GM12878 (cell line): ENCODE measurements at regions of chr12 and their contacts with region 1.

Region 1: DNA sequence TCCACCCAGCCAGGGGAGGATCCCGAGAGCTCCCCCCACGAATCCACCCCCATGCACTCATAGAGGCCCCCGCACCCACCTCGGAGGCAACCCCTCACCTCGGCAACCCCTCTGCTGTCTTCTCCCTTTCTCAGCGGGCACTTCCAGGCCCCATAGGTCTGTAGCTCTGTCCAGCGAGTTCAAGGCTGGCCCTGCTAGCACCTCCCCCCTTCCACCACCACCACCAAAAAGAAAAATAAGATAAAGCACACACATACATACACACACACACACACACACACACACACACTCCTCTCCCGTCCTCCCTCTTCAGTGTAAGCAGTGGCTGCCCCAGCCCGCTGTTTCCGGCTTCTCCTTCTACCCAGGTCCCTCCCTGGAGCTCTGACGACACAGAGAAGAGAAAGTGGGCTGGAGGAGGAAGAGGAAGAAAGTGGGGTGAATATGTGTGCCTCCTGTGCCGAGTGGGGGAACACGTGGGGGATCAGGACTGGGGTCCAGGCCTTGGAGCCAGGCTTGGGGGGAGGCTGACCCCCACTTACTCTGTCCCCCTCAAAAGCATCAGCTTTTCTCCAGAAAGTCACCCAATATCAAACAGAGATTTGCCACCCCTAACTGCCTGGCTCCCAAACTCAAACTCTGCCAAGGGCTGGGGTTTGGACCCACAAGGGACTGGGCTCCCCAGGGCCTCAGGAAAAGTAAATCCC is at the start of gene STAT6:
- DNase-seq: no peak
- ATAC-seq: peak; percentile 81
- H3K4me3 ChIP-seq: peak within 1 kb of the TSS; percentile 95
- H3K27ac ChIP-seq: peak within 1 kb of the TSS; percentile 97
- H3K4me1 ChIP-seq: peaks cover 8% of the 10 kb centered on the region
- H3K27me3 ChIP-seq: no peaks in the 10 kb centered on the region
- CTCF ChIP-seq: no peak
- EP300 ChIP-seq: no peak
- POLR2A ChIP-seq: peak; percentile 74
- RAD21 ChIP-seq: no peak
- polyA plus RNA-seq, gene STAT6: 14.2 to 17.3 TPM

Region 2: DNA sequence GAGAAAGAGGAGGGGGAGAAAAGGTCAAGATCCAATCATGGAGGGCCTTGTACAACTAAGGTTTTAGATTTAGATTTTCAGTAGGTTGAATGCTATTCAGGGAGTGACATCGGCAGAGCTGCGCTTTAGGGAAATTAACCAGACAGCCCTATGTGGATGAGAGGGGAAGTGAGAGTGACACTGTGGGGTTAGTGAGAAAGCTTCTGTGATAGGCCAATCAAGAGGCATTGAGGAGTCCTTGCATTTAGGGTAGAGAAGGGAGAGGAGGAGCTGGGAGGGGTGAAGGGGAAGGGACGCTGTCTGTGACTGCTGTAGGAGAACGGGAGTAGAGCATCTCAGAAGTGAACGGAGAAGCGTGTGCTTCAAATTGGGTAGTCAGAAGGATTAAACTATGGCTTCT is 344.6 kb before region 1 on chr12:
- CTCF ChIA-PET with region 1: interaction called, 9 read pairs
- POLR2A ChIA-PET with region 1: no interaction called
- RAD21 ChIA-PET with region 1: interaction called, 11 read pairs
- SMC1A ChIA-PET with region 1: interaction called, 11 read pairs
- in situ Hi-C with region 1: no loop called
- intact Hi-C with region 1: no loop called
- DNase-seq: peak; percentile 70
- ATAC-seq: peak; percentile 99
- H3K4me3 ChIP-seq: no peak overlapping the region
- H3K27ac ChIP-seq: no peak overlapping the region; the same call in 1 of the 2 replicates
- H3K4me1 ChIP-seq: peaks cover 12% of the 10 kb centered on the region
- H3K27me3 ChIP-seq: no peaks in the 10 kb centered on the region
- CTCF ChIP-seq: no peak
- EP300 ChIP-seq: peak in 1 of 2 experiments; percentile 82; a peak in 2 of 4 replicates
- POLR2A ChIP-seq: no peak
- RAD21 ChIP-seq: no peak

Region 3: DNA sequence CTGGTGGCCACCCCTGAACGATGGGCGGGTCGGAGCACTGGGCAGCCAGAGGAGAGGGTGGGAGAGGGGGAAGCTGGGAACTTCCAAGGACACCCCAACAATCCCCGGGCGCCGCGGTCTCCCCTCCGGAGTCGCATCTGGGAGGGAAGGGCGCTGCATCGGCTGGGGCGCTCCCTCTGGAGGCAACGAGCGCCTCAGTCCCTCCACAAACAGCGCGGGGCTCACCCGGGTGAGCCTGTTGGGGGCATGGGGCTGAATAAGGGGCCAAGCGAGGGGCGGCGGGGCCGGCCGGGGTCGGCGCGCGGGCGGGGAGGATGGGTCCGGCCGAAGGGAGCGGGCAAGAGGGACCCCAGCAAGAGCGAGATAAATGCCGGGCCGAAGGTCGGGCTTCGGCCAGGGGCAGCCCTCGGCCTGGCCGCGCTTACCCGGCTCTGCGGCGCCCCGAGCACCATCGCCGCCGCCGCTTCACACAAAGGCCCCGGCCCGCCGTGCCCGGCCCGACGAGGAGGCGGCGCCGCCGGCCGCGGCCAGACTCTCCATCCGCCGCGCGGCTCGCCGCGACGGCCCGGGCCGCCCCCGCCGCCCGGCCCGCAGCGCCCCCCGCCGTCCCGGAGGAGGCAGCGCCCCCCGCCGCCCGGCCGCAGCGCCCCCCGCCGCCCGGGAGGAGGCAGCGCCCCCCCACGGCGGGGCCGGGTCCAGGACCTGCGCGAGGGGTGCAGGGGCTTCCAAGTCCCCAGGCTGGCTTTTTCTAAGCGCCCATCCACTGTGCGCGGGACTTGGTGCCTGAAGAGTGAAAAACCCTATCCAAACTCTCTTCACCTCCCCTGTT is 105.0 kb before region 1 on chr12 and contains the start of gene ZBTB39:
- CTCF ChIA-PET with region 1: interaction called, 117 read pairs
- POLR2A ChIA-PET with region 1: interaction called, 8 read pairs
- RAD21 ChIA-PET with region 1: interaction called, 44 read pairs
- SMC1A ChIA-PET with region 1: interaction called, 54 read pairs
- in situ Hi-C with region 1: loop called (anchors 5 kb)
- intact Hi-C with region 1: loop called (anchors 1 kb)
- DNase-seq: no peak
- ATAC-seq: peak; percentile 82
- H3K4me3 ChIP-seq: peak within 1 kb of the TSS; percentile 93
- H3K27ac ChIP-seq: peak within 1 kb of the TSS; percentile 28; the same call in 1 of the 2 replicates
- H3K4me1 ChIP-seq: peaks cover 10% of the 10 kb centered on the region
- H3K27me3 ChIP-seq: no peaks in the 10 kb centered on the region
- CTCF ChIP-seq: peak; percentile 48 to 61 (median 58)
- EP300 ChIP-seq: no peak
- POLR2A ChIP-seq: peak; percentile 79
- RAD21 ChIP-seq: peak; percentile 26; the same call in 1 of the 2 replicates
- polyA plus RNA-seq, gene ZBTB39: 0.88 to 0.93 TPM

Region 4: GRCh38 chr12:57069523-57069922 is 41.7 kb before region 1 on chr12:
- CTCF ChIA-PET with region 1: interaction called, 458 read pairs
- POLR2A ChIA-PET with region 1: interaction called, 94 read pairs
- RAD21 ChIA-PET with region 1: interaction called, 285 read pairs
- SMC1A ChIA-PET with region 1: interaction called, 246 read pairs
- in situ Hi-C with region 1: loop called (anchors 5 kb)
- intact Hi-C with region 1: loop called (anchors 1 kb)
- DNase-seq: no peak
- ATAC-seq: peak; percentile 99
- H3K4me3 ChIP-seq: no peak overlapping the region; the same call in 1 of the 2 replicates
- H3K27ac ChIP-seq: peak overlapping the region; percentile 22; the same call in 1 of the 2 replicates
- H3K4me1 ChIP-seq: peaks cover 7% of the 10 kb centered on the region; the same call in 1 of the 2 replicates
- H3K27me3 ChIP-seq: no peaks in the 10 kb centered on the region
- CTCF ChIP-seq: peak; percentile 81 to 92 (median 89)
- EP300 ChIP-seq: no peak
- POLR2A ChIP-seq: no peak
- RAD21 ChIP-seq: peak; percentile 96

Region 5: GRCh38 chr12:57124259-57124877 is 13.2 kb after region 1 on chr12:
- CTCF ChIA-PET with region 1: interaction called, 36 read pairs
- POLR2A ChIA-PET with region 1: no interaction called
- RAD21 ChIA-PET with region 1: interaction called, 13 read pairs
- SMC1A ChIA-PET with region 1: interaction called, 17 read pairs
- in situ Hi-C with region 1: no loop called
- intact Hi-C with region 1: no loop called
- DNase-seq: no peak
- ATAC-seq: peak; percentile 84
- H3K4me3 ChIP-seq: no peak overlapping the region
- H3K27ac ChIP-seq: no peak overlapping the region
- H3K4me1 ChIP-seq: peaks cover 9% of the 10 kb centered on the region
- H3K27me3 ChIP-seq: peaks cover 2 to 5% of the 10 kb centered on the region in 2 experiments
- CTCF ChIP-seq: peak; percentile 75 to 95 (median 94)
- EP300 ChIP-seq: no peak
- POLR2A ChIP-seq: no peak
- RAD21 ChIP-seq: peak; percentile 79

Region 6: GRCh38 chr12:57238854-57239554 is 127.8 kb after region 1 on chr12:
- CTCF ChIA-PET with region 1: interaction called, 11 read pairs
- POLR2A ChIA-PET with region 1: interaction called, 5 read pairs
- RAD21 ChIA-PET with region 1: interaction called, 5 read pairs
- SMC1A ChIA-PET with region 1: no interaction called
- in situ Hi-C with region 1: no loop called
- intact Hi-C with region 1: no loop called
- DNase-seq: no peak
- ATAC-seq: peak; percentile 72
- H3K4me3 ChIP-seq: peak overlapping the region; percentile 68
- H3K27ac ChIP-seq: no peak overlapping the region
- H3K4me1 ChIP-seq: peaks cover 47% of the 10 kb centered on the region
- H3K27me3 ChIP-seq: peaks cover 5 to 8% of the 10 kb centered on the region in 2 experiments; a peak in 3 of 4 replicates
- CTCF ChIP-seq: peak; percentile 100; a peak in 5 of 6 replicates
- EP300 ChIP-seq: no peak
- POLR2A ChIP-seq: peak; percentile 66; the same call in 1 of the 2 replicates
- RAD21 ChIP-seq: peak; percentile 88